GM12878 (cell line): ENCODE measurements at regions of chr3 and their contacts with region 1.

Region 1: GRCh38 chr3:192816351-192816750 is 89.0 kb upstream of the FGF12 start:
- DNase-seq: no peak
- ATAC-seq: 0 out of 3 replicates have a peak, but pooled peaks have one; percentile 7
- H3K4me3 ChIP-seq: no peak overlapping the region
- H3K27ac ChIP-seq: no peak overlapping the region
- H3K4me1 ChIP-seq: peaks cover 30% of the 10 kb centered on the region
- H3K27me3 ChIP-seq: no peaks in the 10 kb centered on the region
- CTCF ChIP-seq: peak; percentile 48 to 75 (median 61); a peak in 5 of 6 replicates
- EP300 ChIP-seq: no peak
- POLR2A ChIP-seq: no peak
- RAD21 ChIP-seq: peak; percentile 94

Region 2: DNA sequence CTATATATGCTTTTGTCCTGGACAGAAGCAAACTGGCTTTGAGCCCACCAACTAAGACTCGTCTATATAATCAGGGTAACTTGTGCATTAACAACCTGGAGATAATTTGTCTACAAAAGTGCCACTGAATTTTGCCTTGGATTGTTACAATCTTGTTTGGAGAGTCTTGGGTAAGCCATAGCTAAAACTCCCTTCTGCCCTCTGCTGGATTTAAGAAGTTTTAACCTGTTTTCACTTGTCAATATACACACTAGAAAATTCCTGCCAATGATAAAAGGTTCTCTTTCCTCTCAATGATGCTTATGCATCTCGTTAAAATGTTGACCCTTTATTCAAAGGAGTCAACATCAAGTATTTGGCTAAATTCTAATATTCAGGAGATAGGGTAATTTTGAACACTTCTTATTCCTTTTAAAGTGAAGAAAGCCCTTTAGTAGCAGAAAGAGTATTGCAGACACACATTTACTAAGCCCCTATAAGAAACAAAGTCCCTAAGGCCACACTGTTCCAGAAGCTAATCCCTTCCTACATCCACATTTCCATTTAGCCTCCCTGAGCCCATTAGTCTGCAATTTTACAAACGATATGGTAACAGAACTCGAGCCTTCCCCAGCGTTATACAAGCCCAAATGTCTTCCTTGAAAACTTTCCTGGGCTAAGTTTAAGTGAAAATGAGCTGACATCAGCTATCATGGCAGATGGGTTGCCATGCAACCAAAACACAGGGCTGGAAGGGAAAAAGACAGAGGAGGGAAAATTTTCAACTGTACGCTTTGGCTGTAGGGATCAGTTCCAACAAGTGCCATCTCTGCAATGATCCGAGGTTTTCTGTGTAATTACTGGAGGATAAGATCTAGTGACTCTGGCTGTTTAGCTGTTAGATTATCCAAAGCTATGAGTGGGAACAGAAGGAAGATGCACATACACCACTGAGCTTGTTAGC is 13.1 kb before region 1 on chr3:
- CTCF ChIA-PET with region 1: interaction called, 32 read pairs
- POLR2A ChIA-PET with region 1: interaction called, 4 read pairs
- RAD21 ChIA-PET with region 1: interaction called, 6 read pairs
- SMC1A ChIA-PET with region 1: interaction called, 96 read pairs
- in situ Hi-C with region 1: no loop called
- intact Hi-C with region 1: no loop called
- DNase-seq: no peak
- ATAC-seq: peak; percentile 87
- H3K4me3 ChIP-seq: no peak overlapping the region
- H3K27ac ChIP-seq: no peak overlapping the region
- H3K4me1 ChIP-seq: no peaks in the 10 kb centered on the region
- H3K27me3 ChIP-seq: no peaks in the 10 kb centered on the region
- CTCF ChIP-seq: peak; percentile 47 to 50 (median 47)
- EP300 ChIP-seq: no peak
- POLR2A ChIP-seq: no peak
- RAD21 ChIP-seq: peak; percentile 34; the same call in 1 of the 2 replicates

Region 3: DNA sequence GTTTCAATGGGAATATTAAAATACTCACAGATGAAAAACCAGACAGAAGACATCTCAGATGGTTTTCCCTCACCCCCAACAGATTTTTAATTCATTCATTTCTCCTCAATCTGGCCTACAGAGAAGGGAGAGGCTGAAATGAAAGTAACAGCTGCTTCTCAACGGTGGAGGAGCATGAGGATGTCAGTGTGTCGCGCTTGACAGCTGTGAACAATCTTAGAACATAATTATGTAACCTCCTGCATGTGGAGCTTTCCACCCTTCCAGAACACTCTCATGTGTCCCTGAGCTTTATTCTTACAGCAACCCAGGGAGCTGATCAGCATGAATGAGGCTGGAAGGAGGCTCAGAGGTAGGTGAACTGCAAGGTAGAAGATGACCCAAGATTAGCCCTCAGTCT is 48.6 kb after region 1 on chr3:
- CTCF ChIA-PET with region 1: interaction called, 4 read pairs
- POLR2A ChIA-PET with region 1: no interaction called
- RAD21 ChIA-PET with region 1: interaction called, 4 read pairs
- SMC1A ChIA-PET with region 1: interaction called, 24 read pairs
- in situ Hi-C with region 1: no loop called
- intact Hi-C with region 1: no loop called
- DNase-seq: no peak
- ATAC-seq: peak; percentile 70
- H3K4me3 ChIP-seq: no peak overlapping the region
- H3K27ac ChIP-seq: peak overlapping the region; percentile 80
- H3K4me1 ChIP-seq: peaks cover 42% of the 10 kb centered on the region
- H3K27me3 ChIP-seq: no peaks in the 10 kb centered on the region
- CTCF ChIP-seq: no peak
- EP300 ChIP-seq: no peak
- POLR2A ChIP-seq: no peak
- RAD21 ChIP-seq: no peak

Region 4: GRCh38 chr3:192899540-192899982 is 83.2 kb after region 1 on chr3:
- CTCF ChIA-PET with region 1: interaction called, 15 read pairs
- POLR2A ChIA-PET with region 1: interaction called, 5 read pairs
- RAD21 ChIA-PET with region 1: interaction called, 80 read pairs
- SMC1A ChIA-PET with region 1: interaction called, 179 read pairs
- in situ Hi-C with region 1: no loop called
- intact Hi-C with region 1: no loop called
- DNase-seq: no peak
- ATAC-seq: peak; percentile 50
- H3K4me3 ChIP-seq: no peak overlapping the region
- H3K27ac ChIP-seq: peak overlapping the region; percentile 70
- H3K4me1 ChIP-seq: peaks cover 49% of the 10 kb centered on the region
- H3K27me3 ChIP-seq: no peaks in the 10 kb centered on the region
- CTCF ChIP-seq: no peak
- EP300 ChIP-seq: no peak
- POLR2A ChIP-seq: 0 out of 2 replicates have a peak, but pooled peaks have one; percentile 2
- RAD21 ChIP-seq: no peak

Region 5: GRCh38 chr3:192957441-192958021 is 141.2 kb after region 1 on chr3:
- CTCF ChIA-PET with region 1: interaction called, 3 read pairs
- POLR2A ChIA-PET with region 1: no interaction called
- RAD21 ChIA-PET with region 1: no interaction called
- SMC1A ChIA-PET with region 1: interaction called, 10 read pairs
- in situ Hi-C with region 1: no loop called
- intact Hi-C with region 1: no loop called
- DNase-seq: no peak
- ATAC-seq: peak; percentile 73
- H3K4me3 ChIP-seq: no peak overlapping the region
- H3K27ac ChIP-seq: no peak overlapping the region
- H3K4me1 ChIP-seq: no peaks in the 10 kb centered on the region
- H3K27me3 ChIP-seq: no peaks in the 10 kb centered on the region
- CTCF ChIP-seq: no peak
- EP300 ChIP-seq: no peak
- POLR2A ChIP-seq: no peak
- RAD21 ChIP-seq: no peak

Region 6: DNA sequence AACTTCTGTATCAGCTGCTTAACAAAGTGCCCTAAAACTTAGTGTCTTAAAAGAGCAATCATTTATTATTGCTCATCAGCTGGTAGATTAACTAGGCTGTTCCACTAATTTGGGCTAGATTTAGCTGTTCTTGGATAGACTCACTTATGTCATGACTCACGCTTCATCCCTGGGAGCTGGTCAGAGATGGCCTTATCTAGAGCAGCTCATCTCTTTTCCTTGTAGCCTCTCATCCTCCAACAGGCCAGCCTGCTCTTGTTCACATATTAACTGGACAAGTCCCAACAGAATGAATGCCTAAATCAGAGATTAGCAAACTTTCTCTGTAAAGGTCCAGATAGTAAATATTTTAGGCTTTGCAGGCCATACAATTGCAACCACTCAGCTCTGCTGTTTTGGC is 357.8 kb after region 1 on chr3:
- CTCF ChIA-PET with region 1: no interaction called
- POLR2A ChIA-PET with region 1: no interaction called
- RAD21 ChIA-PET with region 1: no interaction called
- SMC1A ChIA-PET with region 1: no interaction called
- in situ Hi-C with region 1: no loop called
- intact Hi-C with region 1: loop called (anchors 10 kb)
- DNase-seq: no peak
- ATAC-seq: no peak
- H3K4me3 ChIP-seq: no peak overlapping the region
- H3K27ac ChIP-seq: no peak overlapping the region
- H3K4me1 ChIP-seq: no peaks in the 10 kb centered on the region
- H3K27me3 ChIP-seq: no peaks in the 10 kb centered on the region
- CTCF ChIP-seq: no peak
- EP300 ChIP-seq: no peak
- POLR2A ChIP-seq: no peak
- RAD21 ChIP-seq: no peak